GM10248 (cell line): ENCODE measurements at regions of chr11 and their contacts with region 1.

Region 1: DNA sequence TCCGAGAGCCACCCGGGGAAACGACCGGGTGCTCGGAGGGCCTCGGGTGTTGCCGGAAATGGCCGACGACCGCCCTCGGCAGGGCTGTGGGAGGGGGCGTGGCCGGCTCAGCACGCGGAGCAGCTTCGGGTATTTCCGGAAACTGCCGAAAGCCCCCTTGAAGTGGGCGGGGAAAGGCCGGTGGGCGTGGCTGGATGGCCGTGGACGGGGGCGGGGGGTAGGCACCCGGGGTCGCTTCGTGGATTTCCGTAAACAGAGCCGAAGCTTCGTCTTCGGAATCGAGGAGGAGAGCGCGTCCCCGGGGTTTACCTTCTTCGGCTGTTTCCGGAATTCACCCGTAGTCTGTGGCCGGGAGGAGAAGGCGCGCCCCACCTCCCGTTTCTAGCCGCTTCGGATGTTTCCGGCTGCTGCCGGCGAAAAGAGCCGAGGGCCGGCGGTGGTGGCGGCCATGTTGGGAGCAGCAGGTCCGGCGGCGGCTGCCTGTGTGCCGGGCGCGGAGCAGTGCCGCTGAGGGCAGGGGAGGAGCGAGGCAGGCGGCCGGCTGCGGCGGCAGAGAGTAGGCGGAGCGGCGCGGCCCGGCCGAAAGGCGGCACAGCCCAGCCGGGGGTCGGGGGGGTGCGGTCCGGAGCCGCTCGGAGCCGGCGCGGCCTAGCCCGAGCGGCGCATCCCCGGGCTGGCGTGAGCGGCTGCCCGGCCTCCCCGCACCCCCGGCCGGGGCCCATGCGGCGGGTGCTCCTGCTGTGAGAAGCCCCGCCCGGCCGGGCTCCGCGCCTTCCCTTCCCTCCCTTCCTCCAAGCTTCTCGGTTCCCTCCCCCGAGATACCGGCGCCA is at the start of gene MARK2:
- DNase-seq: peak; percentile 98
- CTCF ChIP-seq: no peak

Region 2: DNA sequence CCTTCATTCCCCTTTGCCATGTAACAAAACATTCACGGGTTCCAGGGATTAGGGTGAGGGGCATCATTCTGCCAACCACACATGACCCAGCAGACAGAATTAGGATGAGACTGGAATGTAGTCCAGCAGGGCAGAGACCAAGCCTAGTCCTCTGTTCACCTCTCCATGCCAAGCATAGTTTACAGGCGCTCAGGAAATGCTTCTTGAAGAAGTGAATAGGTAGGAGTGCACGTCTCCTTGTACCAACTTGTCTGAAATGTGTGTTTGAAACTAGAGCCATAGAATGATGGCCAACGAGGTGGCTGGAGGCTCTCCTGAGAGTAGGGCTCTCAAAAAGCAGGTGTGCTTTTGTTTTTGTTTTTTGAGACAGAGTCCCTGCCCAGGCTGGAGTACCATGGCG is 17.5 kb before region 1 on chr11:
- CTCF ChIA-PET with region 1: interaction called, 42 read pairs
- POLR2A ChIA-PET with region 1: no interaction called
- DNase-seq: no peak
- CTCF ChIP-seq: no peak

Region 3: GRCh38 chr11:63859011-63859550 is 20.2 kb after region 1 on chr11:
- CTCF ChIA-PET with region 1: interaction called, 10 read pairs
- POLR2A ChIA-PET with region 1: interaction called, 3 read pairs
- DNase-seq: no peak
- CTCF ChIP-seq: no peak

Region 4: GRCh38 chr11:63888170-63889086 is 49.5 kb after region 1 on chr11:
- CTCF ChIA-PET with region 1: interaction called, 20 read pairs
- POLR2A ChIA-PET with region 1: no interaction called
- DNase-seq: peak; percentile 78
- CTCF ChIP-seq: no peak

Region 5: GRCh38 chr11:63920939-63921417 is 82.1 kb after region 1 on chr11:
- CTCF ChIA-PET with region 1: interaction called, 27 read pairs
- POLR2A ChIA-PET with region 1: no interaction called
- DNase-seq: peak; percentile 71
- CTCF ChIP-seq: peak; percentile 72

Region 6: DNA sequence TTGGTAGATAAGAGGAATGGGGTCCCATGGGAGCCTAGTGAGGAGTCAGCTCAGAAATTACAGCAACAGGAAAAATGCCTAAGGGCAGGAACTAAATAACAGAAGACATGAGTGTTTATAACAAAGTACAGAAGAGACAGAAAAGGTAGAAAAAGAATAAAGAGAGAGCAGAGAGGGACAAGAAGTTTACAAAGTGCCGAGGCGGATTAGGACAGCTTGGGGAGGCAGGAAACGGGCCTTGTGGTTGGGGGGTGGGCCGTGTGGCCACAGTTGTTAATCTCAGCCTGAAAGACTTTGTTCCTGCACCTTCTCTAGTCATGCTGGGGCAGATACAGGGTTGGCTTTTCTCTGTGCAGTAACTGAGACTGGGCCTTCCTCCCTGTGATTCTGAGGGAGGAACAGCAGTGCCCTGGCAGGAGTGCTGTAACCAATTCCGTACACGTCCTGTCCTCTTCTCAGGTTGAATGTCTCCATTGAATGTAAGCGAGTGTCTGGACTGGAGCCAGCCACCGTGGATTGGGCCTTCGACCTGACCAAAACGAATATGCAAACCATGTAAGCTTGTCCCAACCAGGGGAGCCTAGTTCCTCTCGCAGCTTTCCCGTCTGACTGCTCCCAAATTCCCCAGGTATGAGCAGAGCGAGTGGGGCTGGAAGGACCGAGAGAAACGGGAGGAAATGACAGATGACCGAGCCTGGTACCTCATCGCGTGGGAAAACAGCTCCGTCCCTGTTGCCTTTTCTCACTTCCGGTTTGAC is 113.1 kb after region 1 on chr11:
- CTCF ChIA-PET with region 1: interaction called, 129 read pairs
- POLR2A ChIA-PET with region 1: no interaction called
- DNase-seq: peak; percentile 65
- CTCF ChIP-seq: no peak